ENCODE measurements at regions of chr20 and their contacts with region 1.

Region 1: GRCh38 chr20:4720041-4720976 is 1.4 kb upstream of the PRND start:
- DNase-seq: peak; percentile 69
- H3K4me3 ChIP-seq: no peak overlapping the region
- H3K27ac ChIP-seq: no peak overlapping the region
- H3K4me1 ChIP-seq: no peaks in the 10 kb centered on the region
- H3K27me3 ChIP-seq: peaks cover 3 to 6% of the 10 kb centered on the region in 2 experiments
- CTCF ChIP-seq: peak; percentile 60 to 74
- POLR2A ChIP-seq: no peak

Region 2: GRCh38 chr20:4524307-4524706 is 196.0 kb before region 1 on chr20:
- CTCF ChIA-PET with region 1: no interaction called
- POLR2A ChIA-PET with region 1: no interaction called
- dilution Hi-C with region 1: no loop called
- intact Hi-C with region 1: no loop called
- DNase-seq: no peak
- H3K4me3 ChIP-seq: no peak overlapping the region
- H3K27ac ChIP-seq: no peak overlapping the region
- H3K4me1 ChIP-seq: no peaks in the 10 kb centered on the region
- H3K27me3 ChIP-seq: no peaks in the 10 kb centered on the region
- CTCF ChIP-seq: no peak
- POLR2A ChIP-seq: no peak

Region 3: DNA sequence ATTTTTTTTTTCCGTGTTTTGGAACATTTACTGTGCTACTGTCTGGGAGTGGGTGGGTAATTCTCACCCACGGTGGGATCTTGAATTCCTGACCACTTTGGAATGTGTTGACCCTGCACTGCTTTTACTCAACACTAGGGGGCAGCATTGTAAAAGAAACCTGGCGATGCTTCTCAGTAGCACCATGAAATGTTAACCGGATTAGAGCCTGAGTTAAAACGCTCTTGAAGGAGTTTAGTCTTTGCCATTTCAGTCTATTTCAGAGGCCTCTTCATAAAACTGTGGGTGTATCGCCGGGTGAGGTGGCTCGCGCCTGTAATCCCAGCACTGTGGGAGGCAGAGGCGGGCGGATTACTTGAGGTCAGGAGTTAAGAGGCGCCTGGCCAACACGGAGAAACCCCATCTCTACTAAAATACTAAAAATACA is 113.0 kb before region 1 on chr20:
- CTCF ChIA-PET with region 1: interaction called, 22 read pairs
- POLR2A ChIA-PET with region 1: no interaction called
- dilution Hi-C with region 1: no loop called
- intact Hi-C with region 1: loop called (anchors 1 kb)
- DNase-seq: peak; percentile 66
- H3K4me3 ChIP-seq: no peak overlapping the region
- H3K27ac ChIP-seq: no peak overlapping the region
- H3K4me1 ChIP-seq: no peaks in the 10 kb centered on the region
- H3K27me3 ChIP-seq: peaks cover 19 to 33% of the 10 kb centered on the region in 2 experiments
- CTCF ChIP-seq: peak; percentile 73 to 86
- POLR2A ChIP-seq: no peak

Region 4: GRCh38 chr20:4985658-4986057 is 265.3 kb after region 1 on chr20:
- CTCF ChIA-PET with region 1: no interaction called
- POLR2A ChIA-PET with region 1: no interaction called
- dilution Hi-C with region 1: no loop called
- intact Hi-C with region 1: no loop called
- DNase-seq: no peak
- H3K4me3 ChIP-seq: no peak overlapping the region
- H3K27ac ChIP-seq: no peak overlapping the region
- H3K4me1 ChIP-seq: no peaks in the 10 kb centered on the region
- H3K27me3 ChIP-seq: no peaks in the 10 kb centered on the region
- CTCF ChIP-seq: no peak
- POLR2A ChIP-seq: no peak

Measured in endothelial cell of umbilical vein (primary cell).